Caco-2 (cell line): ENCODE measurements at regions of chr10 and their contacts with region 1.

Region 1: GRCh38 chr10:97416565-97416964 is 9.4 kb upstream of the PGAM1 start:
- DNase-seq: no peak
- H3K4me3 ChIP-seq: no peak overlapping the region
- H3K4me3 Mint-ChIP-seq: no peak overlapping the region
- H3K27ac Mint-ChIP-seq: no peak overlapping the region
- H3K4me1 ChIP-seq: peaks cover 9% of the 10 kb centered on the region
- H3K4me1 Mint-ChIP-seq: peaks cover 14% of the 10 kb centered on the region
- H3K27me3 ChIP-seq: no peaks in the 10 kb centered on the region
- H3K27me3 Mint-ChIP-seq: no peaks in the 10 kb centered on the region
- CTCF ChIP-seq: no peak

Region 2: DNA sequence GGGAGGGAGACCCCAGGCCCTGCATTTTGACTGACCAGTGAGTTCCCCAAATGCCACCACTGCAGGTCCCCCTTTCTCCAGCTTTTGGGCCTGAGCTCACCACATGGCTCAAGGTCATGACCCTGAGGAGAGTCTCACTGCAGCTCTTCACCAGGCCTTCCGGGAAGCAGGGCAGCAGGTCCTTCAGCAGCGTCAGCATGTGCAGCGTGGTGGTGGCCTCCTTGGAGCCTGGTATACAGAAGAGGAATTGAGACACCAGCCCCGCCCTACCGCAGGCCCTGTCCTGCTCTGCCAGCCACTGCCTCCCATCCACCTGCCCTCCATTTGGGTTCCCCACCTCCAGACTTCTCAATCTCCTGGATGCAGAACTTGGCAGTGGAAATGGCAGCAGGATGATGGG is 28.4 kb before region 1 on chr10:
- CTCF ChIA-PET with region 1: no interaction called
- POLR2A ChIA-PET with region 1: no interaction called
- intact Hi-C with region 1: no loop called
- DNase-seq: no peak
- H3K4me3 ChIP-seq: no peak overlapping the region
- H3K4me3 Mint-ChIP-seq: no peak overlapping the region
- H3K27ac Mint-ChIP-seq: no peak overlapping the region
- H3K4me1 ChIP-seq: no peaks in the 10 kb centered on the region
- H3K4me1 Mint-ChIP-seq: no peaks in the 10 kb centered on the region
- H3K27me3 ChIP-seq: no peaks in the 10 kb centered on the region
- H3K27me3 Mint-ChIP-seq: no peaks in the 10 kb centered on the region
- CTCF ChIP-seq: no peak

Region 3: DNA sequence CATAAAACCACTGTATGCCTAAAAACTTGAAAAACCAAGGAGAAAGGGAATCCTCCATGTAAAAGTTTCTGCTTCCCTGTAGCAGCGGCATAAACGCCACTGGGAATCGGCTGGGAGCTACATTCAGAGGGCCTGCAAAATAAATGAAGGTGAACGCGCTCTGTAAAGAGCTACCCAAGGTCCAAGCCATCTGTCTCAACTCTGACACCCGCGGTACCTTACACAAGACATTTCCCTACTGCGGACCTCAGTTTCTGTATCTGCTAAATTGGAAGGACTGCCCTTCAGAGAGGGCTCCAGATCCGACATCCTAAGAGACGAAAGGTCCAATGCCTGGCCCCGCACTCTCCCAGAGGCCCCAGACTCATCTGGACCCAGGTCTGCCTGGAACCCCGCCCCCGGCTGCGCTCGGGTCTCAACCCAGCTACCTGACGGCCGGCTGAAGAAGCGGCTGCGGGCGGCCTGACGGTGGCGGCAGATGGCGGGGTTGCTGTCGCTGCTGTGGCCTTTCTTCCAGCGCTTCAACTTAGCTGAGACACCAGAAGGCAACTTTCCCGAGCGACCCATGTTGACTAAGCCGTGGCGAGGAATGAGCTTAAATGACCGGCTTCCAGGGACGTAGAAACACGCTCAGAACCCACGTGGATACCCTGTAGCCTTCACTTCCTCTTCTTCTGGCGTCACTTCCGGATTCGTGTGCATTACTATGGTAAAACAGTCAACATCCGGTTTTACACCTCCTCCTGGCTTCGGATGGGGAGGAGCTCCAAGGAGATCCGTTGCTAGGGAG is 15.7 kb before region 1 on chr10 and contains the start of gene RRP12:
- CTCF ChIA-PET with region 1: interaction called, 6 read pairs
- POLR2A ChIA-PET with region 1: interaction called, 12 read pairs
- intact Hi-C with region 1: no loop called
- DNase-seq: peak; percentile 93 to 94
- H3K4me3 ChIP-seq: peak within 1 kb of the TSS; percentile 89
- H3K4me3 Mint-ChIP-seq: peak within 1 kb of the TSS; percentile 92
- H3K27ac Mint-ChIP-seq: peak within 1 kb of the TSS; percentile 95
- H3K4me1 ChIP-seq: no peaks in the 10 kb centered on the region
- H3K4me1 Mint-ChIP-seq: no peaks in the 10 kb centered on the region
- H3K27me3 ChIP-seq: no peaks in the 10 kb centered on the region
- H3K27me3 Mint-ChIP-seq: no peaks in the 10 kb centered on the region
- CTCF ChIP-seq: peak in 1 of 2 experiments; percentile 39
- total RNA-seq, gene RRP12: 69.3 and 70.5 TPM in 2 replicates